Right cardiac atrium (tissue), 5 donors: ENCODE measurements at regions of chr11 and their contacts with region 1.

Region 1: DNA sequence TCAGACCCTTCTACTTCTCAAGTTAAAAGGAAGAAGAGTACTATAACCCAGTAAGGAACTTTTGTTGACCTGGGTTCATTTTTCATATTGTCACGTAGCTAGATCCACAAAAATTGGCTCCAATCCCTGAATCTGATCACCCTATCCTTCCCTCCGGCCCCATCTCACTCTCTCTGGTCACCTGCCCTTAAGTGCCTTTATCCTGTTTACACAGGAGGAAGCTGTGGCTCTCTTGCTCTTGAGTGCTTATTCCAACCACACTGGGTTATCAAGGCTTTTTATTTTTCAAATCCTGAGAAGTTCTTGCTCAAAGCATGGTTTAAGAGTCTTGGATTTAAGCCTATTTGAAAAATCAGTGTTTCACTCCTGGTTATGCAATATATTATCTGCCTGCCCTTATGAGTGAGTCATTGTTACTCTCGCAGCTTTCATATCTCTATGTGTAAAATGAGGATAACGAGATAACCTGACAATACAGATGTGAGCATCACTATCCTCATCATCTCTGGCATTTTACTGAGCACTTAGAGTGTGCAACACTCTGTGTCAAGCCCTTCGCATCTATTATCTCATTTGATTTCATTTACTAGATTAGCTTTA is 293.9 kb downstream of the GUCY1A2 start:
- DNase-seq: no peak
- ATAC-seq: peak in 1 of 2 donors; percentile 16
- H3K4me3 ChIP-seq: no peak overlapping the region
- H3K27ac ChIP-seq: no peak overlapping the region
- H3K4me1 ChIP-seq: no peaks in the 10 kb centered on the region
- H3K27me3 ChIP-seq: no peaks in the 10 kb centered on the region

Region 2: DNA sequence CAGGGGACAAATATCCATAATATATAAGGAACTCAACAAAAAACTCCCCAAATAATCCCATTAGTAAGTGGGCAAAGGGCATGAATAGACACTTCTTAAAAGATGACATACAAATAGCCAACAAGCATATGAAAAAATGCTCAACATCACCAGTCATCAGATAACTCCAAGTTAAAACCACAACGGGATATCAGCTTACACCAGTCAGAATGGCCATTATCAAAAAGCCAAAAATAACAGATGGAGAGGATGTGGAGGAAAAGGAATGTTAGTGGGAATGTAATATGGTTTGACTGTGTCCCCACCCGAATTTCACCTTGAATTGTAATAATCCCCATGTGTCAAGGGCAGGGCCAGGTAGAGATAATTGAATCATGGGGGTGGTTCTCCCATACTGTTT is 56.2 kb before region 1 on chr11:
- intact Hi-C with region 1: no loop called
- DNase-seq: no peak
- ATAC-seq: no peak
- H3K4me3 ChIP-seq: no peak overlapping the region
- H3K27ac ChIP-seq: no peak overlapping the region
- H3K4me1 ChIP-seq: no peaks in the 10 kb centered on the region
- H3K27me3 ChIP-seq: no peaks in the 10 kb centered on the region

Region 3: DNA sequence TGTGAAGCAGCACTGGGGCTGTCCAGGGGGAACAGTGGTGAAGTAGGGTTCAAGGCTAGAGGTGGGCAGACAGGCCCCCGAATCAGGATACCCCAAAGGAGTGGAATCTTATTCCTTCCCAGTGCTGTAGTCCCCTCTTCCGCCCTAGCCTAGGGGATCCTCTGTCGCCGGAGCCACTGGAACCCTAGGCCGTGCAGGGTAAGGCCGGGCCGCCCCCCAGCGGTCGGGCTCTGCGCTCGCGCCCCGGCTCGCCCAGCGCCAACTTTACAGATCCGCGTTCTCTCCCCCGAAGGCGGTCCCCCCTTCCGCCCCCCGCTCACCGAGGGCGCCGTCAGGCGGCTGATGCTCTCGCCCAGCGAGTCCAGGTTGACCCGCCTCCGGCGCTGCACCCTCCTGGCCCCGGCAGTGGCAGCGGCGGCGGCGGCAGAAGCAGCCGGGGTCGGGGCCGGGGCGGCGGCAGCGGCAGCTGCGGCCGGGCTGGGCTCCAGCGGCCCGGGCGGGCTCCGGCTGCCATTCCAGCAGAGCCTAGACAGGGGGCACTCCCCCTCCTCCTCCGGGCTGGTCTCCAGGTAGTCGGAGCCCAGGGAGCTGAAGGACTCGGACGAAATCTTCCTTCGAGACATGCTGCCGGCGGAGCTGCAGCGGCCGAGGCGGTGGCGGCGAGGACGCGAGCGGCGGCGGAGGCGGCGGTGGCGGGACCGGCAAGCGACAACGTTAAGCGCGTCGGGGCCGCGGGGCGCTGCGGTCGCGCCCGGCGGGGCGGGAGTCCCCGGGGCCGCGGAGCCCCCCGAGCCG is 293.2 kb after region 1 on chr11:
- intact Hi-C with region 1: loop called in 2 of 4 experiments (anchors 10 kb)
- DNase-seq: peak; percentile 25 to 80 (median 74)
- ATAC-seq: peak; percentile 82 to 84
- H3K4me3 ChIP-seq: peak overlapping the region; percentile 48
- H3K27ac ChIP-seq: no peak overlapping the region
- H3K4me1 ChIP-seq: no peaks in the 10 kb centered on the region
- H3K27me3 ChIP-seq: no peaks in the 10 kb centered on the region

Region 4: DNA sequence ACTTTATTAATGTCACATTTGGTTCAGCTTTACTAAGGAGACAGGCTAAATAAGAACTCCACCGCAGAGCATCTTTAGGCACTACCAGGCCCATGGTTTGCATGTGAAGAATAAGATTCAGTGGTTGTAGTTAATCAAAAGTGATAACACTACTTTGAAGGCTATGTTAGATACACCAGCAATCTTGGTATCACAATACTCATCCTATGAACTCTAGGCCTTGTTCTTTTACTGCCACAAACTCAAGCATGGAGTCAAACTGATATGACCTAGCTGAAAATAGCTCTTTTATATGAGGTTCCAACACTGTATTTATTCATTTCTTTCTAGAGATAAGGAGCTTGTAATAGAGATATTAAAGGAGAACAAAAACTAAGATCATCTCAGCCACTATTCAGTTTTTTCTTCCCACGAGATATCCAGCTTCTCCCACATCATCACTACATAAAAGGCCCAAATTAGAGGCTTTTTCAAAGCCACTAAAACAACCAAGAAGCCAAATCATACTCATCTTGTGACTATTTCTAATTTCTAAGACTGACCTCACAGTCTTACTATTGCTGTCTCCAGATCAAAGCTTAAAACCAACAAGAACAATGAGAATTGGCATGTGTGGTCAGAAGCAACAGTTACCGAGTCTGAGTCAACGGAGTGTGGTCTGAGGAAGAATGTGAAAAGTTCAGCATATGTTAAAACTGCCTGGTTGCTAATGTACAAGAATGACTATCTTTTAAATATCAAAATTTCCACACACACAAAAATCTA is 319.0 kb after region 1 on chr11:
- intact Hi-C with region 1: loop called in 1 of 4 experiments (anchors 10 kb)
- DNase-seq: no peak
- ATAC-seq: no peak
- H3K4me3 ChIP-seq: no peak overlapping the region
- H3K27ac ChIP-seq: no peak overlapping the region
- H3K4me1 ChIP-seq: no peaks in the 10 kb centered on the region
- H3K27me3 ChIP-seq: no peaks in the 10 kb centered on the region